ENCODE measurements at regions of chr10 and their contacts with region 1.

Region 1: DNA sequence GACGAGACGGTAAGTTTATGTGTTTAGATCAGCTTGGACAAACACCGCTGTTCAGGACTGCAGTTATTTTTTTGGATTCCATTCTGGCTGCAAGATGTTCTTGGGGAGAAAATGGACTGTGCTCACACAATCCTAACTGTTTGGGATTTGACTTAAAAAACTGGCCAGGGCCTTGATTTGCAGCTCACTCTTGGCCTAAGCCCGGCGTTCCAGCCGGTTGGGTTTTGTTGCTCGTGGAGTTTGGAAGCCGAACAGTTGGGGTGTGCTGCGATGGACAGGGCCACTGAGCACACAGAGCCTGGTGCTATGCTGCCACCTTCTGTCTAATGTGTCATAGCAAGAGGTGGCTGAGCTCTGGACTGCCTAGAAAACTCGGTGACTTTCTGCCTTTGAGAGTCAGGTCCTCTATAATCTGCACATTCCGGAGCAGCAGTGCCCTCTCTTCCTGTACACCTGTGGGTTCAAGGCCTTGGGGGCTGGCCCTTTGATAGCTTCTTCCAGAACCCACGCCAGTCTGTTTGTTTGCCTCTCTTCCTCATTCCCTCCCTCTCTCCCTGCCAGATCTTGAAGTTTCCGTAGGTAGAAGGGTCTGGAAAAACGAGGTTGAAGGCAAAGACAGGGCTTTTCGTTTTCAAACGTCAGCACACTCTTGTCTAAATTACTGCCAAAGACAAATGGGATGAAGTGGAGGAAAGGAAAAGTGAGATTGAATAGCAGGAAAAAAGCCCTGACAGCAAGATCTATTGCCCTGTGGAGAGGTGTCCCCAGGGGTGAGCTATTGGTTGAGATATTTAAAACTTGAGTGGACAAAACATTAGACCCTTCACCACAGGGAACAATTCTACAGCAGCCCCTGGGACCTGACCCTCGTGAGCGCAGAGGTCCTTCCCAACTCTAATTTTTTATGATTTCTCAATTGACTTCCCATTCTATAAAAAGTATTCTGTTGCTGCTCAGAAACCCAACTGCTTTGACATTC is 167.5 kb upstream of the HABP2 start:
- DNase-seq: peak; percentile 53
- CTCF ChIP-seq: peak; percentile 57

Region 2: DNA sequence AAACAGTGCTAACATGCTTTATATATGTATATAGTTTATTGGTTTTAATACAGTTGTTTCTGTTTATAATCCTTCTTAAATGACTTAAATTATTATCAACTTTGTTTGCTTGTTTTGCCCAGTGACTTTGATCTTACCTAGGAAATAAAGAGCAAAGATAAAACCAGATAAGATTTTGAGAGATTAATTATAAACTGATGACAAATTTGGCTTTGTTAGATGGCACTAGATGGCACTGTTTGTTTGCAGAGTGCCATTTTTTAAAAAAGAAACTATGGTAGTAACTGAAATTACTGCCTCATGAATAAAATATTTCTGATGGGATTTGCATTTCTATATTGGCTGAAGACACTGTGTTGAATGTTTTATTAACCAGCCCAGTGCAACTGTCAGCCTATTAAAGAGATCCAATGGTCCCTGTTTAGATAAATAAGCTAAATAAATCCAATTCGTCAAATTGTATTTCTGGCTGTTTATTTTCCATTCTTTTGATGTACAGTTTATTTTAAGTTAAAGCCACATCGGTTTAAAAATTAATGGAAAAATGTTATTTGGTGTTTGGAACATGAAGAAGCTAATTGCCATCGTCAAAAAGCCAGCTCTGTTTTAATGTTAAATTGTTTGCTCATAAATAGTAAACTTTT is 909.6 kb before region 1 on chr10:
- in situ Hi-C with region 1: loop called (anchors 25 kb)
- DNase-seq: no peak
- CTCF ChIP-seq: peak; percentile 22

Region 3: DNA sequence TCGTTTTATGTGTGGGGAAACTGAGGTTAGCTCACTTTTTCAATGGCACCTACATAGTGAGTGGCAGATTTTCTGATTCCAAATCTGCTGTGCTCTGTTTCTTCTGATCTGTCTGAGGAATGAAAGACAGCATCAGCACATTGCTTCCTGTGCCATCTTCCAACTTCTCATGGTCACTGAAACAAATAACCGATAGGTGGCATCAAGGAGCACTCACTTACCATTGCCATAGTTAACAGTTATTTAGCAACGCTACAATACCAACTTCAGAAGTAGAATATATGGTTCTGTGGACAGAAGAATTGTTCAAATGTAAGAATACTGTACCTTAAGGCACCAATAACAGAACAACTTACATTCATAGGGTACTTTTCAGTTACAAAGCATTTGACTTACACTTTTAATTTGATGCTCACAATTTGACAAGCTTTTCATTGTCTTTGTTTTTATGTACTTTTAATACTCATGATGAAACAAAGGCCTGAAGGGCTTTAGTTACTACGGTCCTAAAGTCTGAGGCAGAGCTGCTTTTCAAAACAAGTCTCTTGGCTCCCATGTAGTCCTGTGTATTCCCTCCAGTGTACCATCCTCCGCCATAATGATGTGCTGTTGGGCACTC is 664.1 kb before region 1 on chr10:
- in situ Hi-C with region 1: loop called (anchors 25 kb)
- DNase-seq: peak; percentile 32
- CTCF ChIP-seq: peak; percentile 36

Region 4: GRCh38 chr10:113475381-113475807 is 90.1 kb after region 1 on chr10:
- in situ Hi-C with region 1: no loop called
- DNase-seq: no peak
- CTCF ChIP-seq: no peak